Activated CD4-positive, alpha-beta T cell treated with anti-CD3 and anti-CD28 coated beads, Interleukin-2, amount 10 ng/mL, durations not matched to agents 7 days and 5 days (primary cell): ENCODE measurements at regions of chr19 and their contacts with region 1.

Region 1: GRCh38 chr19:5170329-5170745 is 170.3 kb downstream of the PTPRS start:
- DNase-seq: peak; percentile 59
- H3K4me3 Mint-ChIP-seq: no peak overlapping the region
- H3K27ac Mint-ChIP-seq: peak overlapping the region; percentile 26
- H3K4me1 Mint-ChIP-seq: no peaks in the 10 kb centered on the region
- H3K27me3 Mint-ChIP-seq: peaks cover 8% of the 10 kb centered on the region

Region 2: DNA sequence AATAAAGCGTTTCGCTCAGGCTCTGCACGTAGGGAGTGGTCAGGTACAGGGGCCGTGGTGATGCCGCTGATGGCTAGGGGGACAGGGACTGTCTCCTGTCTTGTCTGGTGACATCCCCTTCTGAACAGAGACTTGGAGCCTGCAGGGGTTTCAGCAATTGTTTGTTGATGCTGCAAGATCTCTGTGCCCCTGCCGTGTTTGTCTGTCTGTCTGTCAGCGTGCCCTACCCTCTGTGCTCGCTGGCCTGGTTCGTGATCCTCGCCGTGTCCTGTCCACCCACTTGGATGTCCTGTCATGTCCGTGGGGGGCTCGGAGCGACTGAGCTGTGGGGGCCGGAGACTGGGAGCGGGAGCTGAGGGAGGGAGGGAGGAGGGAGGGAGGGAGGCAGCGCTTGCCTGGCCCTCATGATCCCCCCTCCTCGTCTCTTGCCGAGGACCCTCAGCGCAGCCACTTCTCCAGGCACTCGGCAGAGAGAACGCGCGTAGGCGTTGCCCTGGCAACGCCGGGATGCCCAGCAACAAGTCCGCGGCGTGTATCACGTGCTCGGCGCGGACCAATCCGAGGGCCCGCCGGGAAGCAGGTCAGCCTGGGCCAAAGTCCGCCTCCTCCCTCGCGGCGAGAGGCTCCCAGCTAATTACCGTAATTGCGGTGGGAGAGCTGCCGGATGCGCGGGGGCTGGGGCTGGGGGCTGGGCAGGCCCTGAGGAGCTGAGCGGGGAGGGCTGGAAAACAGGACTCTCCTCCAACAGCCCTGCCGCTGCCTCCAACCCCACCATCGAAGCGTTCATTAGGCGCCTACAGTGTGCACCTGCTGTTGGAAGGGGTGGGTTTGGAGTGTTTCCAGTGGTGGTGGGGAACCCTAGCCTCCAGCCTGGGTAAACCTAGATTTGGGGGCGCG is 410.7 kb before region 1 on chr19:
- CTCF ChIA-PET with region 1: no interaction called
- POLR2A ChIA-PET with region 1: interaction called, 13 read pairs
- DNase-seq: peak; percentile 58
- H3K4me3 Mint-ChIP-seq: no peak overlapping the region
- H3K27ac Mint-ChIP-seq: no peak overlapping the region
- H3K4me1 Mint-ChIP-seq: peaks cover 4% of the 10 kb centered on the region
- H3K27me3 Mint-ChIP-seq: peaks cover 26% of the 10 kb centered on the region